A549 (cell line): ENCODE measurements at regions of chr19 and their contacts with region 1.

Region 1: GRCh38 chr19:13748169-13748828 is 16.0 kb upstream of the MRI1 start:
- DNase-seq: peak; percentile 18 to 44
- ATAC-seq: peak; percentile 7 to 27; a peak in 4 of 6 replicates
- H3K4me3 ChIP-seq: peak overlapping the region; percentile 64
- H3K27ac ChIP-seq: peak overlapping the region; percentile 80 to 96
- H3K4me1 ChIP-seq: peaks cover 6% of the 10 kb centered on the region; the same call in 1 of the 3 replicates
- CTCF ChIP-seq: no peak
- EP300 ChIP-seq: no peak
- POLR2A ChIP-seq: no peak
- RAD21 ChIP-seq: no peak

Region 2: DNA sequence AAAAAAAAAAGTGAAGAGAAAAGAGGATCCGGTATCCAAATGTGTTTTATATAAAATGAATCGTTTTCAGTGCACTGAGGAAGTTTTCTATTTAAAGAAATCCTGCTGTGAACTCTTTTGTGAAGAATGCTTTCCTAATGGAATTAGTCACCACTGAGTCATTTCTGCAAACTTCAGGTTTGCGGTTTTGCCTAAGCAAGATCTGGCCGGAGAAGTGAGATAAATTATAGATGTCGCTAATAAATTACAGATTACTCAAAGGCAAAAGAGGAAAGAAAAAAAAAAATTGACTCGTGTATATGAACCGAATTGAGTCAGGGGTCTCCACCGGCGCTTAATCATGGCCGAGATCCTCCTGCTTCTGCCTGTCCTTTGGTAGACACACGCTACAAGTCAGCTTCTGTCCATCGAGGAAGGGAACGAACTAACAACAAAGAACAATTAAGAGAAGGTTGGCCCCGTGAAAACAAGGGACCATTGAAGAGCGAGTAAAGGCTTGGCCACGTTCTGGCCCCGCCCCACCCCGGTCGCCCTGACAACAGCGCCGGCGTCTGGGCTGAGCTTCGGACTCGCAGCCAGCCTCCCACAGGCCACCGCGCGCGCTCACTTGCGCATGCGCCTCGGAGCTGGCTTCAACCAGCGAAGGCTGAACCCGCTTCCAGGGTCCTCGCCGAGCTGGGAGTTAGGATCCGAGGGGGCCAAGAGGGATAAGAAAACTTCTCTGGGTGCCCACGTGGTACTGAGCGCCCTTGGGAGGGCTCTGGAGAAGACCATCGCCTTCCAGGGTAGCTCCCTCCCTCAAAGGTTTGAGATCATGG is 16.9 kb before region 1 on chr19:
- CTCF ChIA-PET with region 1: interaction called, 3 read pairs
- POLR2A ChIA-PET with region 1: interaction called, 17 read pairs
- DNase-seq: peak; percentile 86 to 93
- ATAC-seq: peak; percentile 99
- H3K4me3 ChIP-seq: peak overlapping the region; percentile 54
- H3K27ac ChIP-seq: peak overlapping the region; percentile 83 to 96
- H3K4me1 ChIP-seq: peaks cover 16% of the 10 kb centered on the region
- CTCF ChIP-seq: no peak
- EP300 ChIP-seq: no peak
- POLR2A ChIP-seq: peak; percentile 68
- RAD21 ChIP-seq: no peak

Region 3: DNA sequence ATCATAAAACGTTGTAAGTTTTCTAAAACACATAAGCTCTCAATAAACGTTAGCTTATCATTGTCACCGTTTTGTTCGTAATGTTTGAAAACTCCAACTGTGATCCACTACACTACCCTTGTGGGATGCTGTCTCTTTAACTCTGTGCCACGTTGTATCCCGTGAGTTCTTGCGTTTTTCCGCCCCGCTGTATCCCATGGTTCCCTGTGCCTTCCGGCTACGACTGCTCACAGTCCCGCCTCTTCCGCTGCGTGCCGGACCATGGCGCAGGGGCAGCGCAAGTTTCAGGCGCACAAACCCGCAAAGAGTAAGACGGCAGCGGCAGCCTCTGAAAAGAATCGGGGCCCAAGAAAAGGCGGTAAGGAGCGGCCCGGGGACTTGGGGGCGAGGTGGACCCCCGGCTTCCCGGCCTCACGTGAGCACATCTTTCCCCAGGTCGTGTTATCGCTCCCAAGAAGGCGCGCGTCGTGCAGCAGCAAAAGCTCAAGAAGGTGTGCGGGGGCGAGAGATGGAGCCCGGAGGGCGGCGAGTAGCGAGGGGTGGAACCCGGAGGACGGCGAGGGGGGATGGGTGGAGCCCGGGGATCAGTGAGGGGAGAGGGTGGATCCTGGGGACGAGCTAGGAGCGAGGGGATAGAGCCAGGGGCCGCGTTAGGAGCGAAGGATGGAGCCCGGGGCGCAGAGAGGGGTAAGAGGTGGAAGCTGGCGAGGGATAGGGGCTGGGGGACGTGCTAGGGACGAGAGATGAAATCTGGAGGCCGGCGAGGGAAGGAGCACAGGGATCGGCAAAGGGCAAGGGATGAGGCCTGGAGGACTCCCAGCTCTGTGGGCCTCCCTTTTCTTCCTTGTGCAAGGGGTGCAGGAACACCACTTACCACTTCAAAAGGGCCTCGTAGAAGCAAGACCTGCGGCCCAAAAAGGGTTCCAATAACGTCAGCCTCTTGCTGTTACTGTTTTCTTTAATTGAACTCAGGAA is 26.2 kb after region 1 on chr19 and contains the start of gene C19orf53:
- CTCF ChIA-PET with region 1: interaction called, 3 read pairs
- POLR2A ChIA-PET with region 1: interaction called, 12 read pairs
- DNase-seq: peak; percentile 85 to 88
- ATAC-seq: peak; percentile 99 to 100
- H3K4me3 ChIP-seq: peak within 1 kb of the TSS; percentile 94
- H3K27ac ChIP-seq: peak within 1 kb of the TSS; percentile 91 to 98
- H3K4me1 ChIP-seq: peaks cover 10% of the 10 kb centered on the region; the same call in 2 of the 3 replicates
- CTCF ChIP-seq: no peak
- EP300 ChIP-seq: no peak
- POLR2A ChIP-seq: peak; percentile 57
- RAD21 ChIP-seq: no peak
- polyA plus RNA-seq, gene C19orf53: 105 and 131 TPM in 2 replicates

Region 4: GRCh38 chr19:13788991-13789390 is 40.7 kb after region 1 on chr19:
- CTCF ChIA-PET with region 1: no interaction called
- POLR2A ChIA-PET with region 1: no interaction called
- DNase-seq: no peak
- ATAC-seq: no peak
- H3K4me3 ChIP-seq: no peak overlapping the region
- H3K27ac ChIP-seq: peak overlapping the region in 1 of 2 experiments; percentile 46; a peak in 1 of 6 replicates
- H3K4me1 ChIP-seq: peaks cover 24% of the 10 kb centered on the region; the same call in 2 of the 3 replicates
- CTCF ChIP-seq: no peak
- EP300 ChIP-seq: no peak
- POLR2A ChIP-seq: no peak
- RAD21 ChIP-seq: no peak